Lower leg skin (tissue), 4 donors: ENCODE measurements at regions of chr10 and their contacts with region 1.

Region 1: DNA sequence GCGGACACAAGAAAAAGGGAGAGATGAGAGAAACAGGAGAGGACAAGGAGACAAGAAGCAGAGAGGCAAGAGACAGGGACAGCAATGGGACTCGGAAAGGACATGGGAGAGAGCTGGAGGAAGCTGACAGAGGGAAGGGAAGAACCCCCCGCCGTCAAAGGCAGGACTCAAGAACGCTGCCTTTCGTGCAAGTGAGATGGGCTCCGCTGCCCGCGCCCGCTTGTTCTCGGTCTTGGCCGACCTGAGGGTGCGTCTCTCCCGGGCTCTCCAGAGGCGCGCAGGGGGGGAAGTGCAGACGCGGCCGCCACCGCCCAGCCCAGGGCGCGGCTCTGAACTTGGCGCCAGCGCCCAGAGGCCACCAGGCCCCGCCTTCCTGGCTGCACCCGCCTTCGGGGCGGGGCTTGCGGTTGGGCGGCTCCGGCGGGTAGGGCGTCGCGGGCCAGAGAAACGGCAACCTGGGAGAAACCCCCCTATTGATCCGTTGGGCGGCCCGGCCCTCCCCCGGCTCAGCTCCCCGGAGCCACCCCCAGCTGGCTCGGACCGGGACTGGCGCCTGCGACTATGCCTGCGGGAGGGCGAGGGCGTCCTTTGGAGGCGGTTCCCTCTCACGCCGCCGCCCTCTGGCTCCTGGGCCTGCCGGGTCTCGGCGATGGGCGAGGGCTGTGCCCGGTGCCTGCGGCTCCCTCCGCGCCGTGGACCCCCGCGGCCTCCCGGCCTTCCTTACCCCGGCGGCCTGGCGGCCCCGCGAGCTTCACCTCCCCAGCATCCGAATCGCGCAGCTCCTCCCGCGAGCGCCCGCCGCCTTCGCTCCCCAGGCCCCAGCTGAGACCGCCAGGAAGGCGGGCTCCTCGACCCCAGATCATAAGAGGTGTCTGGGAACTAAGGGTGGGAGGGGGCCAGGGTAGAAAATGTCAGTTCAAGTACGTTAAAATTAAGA is 2.2 kb upstream of the ANTXRL start:
- DNase-seq: peak; percentile 84 to 97
- H3K4me3 ChIP-seq: peak overlapping the region; percentile 51
- CTCF ChIP-seq: no peak
- POLR2A ChIP-seq: no peak

Region 2: DNA sequence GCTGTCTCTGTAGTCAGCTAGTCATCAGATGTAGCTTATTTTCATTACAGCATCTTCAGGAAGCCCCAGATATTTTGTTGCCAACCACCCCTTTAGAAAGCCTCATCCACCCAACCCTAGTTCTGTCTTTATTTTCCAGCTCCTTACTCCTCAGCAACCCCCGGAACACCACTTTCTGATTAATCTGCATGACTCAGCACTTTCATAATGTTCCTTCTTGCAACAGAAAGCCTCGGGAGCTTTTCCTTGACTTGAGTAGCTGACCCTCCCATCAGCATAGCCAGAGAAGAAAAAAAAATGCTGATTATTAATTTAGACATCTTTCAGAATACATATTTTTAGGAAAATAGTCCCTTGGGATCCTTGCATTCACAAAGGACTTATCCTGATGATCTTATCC is 1655.6 kb before region 1 on chr10:
- intact Hi-C with region 1: no loop called
- DNase-seq: peak in 1 of 2 donors; percentile 26
- H3K4me3 ChIP-seq: no peak overlapping the region
- CTCF ChIP-seq: no peak
- POLR2A ChIP-seq: no peak

Region 3: GRCh38 chr10:46106410-46107255 is 177.9 kb before region 1 on chr10:
- intact Hi-C with region 1: loop called (anchors 5 kb)
- DNase-seq: peak; percentile 27 to 87
- H3K4me3 ChIP-seq: peak overlapping the region; percentile 17
- CTCF ChIP-seq: peak in 1 of 3 donors; percentile 66
- POLR2A ChIP-seq: no peak

Region 4: DNA sequence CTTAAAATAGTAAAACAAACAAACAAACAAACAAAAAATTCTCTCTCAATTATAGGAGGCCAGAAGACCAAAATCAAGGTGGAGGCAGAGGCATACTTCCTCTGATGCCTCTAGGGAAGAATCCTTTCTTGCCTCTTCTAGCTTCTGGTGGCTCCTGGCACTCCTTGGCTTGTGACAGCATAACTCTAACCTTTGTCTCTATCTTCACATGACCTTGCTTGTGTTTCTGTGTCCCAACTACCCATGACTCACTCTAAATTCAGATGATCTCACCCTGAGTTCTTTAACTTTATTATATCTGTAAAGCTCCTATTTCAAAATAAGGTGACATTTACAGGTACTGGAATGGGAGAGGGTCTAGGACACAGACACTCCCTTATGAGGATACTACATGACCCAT is 86.0 kb before region 1 on chr10:
- intact Hi-C with region 1: no loop called
- DNase-seq: no peak
- H3K4me3 ChIP-seq: no peak overlapping the region
- CTCF ChIP-seq: no peak
- POLR2A ChIP-seq: no peak

Region 5: DNA sequence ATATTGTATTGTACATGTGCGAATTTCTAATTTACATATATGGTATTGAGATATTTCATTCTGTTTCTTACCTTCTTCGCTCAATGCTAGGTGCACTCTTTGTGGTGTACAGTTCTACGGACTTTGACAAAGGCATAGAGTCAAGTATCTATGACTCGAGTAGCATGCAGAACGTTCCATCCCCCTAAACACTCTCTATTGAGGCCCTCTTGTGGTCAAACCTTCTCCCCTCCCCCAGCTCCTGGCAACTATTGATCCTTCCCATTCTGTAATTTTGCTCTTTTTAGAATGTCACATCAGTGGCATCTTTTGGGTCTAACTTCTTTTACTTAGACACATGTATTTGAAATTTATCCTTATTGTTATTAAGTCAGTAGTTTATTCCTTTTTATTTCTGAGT is 984.7 kb after region 1 on chr10:
- intact Hi-C with region 1: no loop called
- DNase-seq: no peak
- H3K4me3 ChIP-seq: no peak overlapping the region
- CTCF ChIP-seq: no peak
- POLR2A ChIP-seq: no peak